Endothelial cell of umbilical vein (primary cell): ENCODE measurements at regions of chr5 and their contacts with region 1.

Region 1: DNA sequence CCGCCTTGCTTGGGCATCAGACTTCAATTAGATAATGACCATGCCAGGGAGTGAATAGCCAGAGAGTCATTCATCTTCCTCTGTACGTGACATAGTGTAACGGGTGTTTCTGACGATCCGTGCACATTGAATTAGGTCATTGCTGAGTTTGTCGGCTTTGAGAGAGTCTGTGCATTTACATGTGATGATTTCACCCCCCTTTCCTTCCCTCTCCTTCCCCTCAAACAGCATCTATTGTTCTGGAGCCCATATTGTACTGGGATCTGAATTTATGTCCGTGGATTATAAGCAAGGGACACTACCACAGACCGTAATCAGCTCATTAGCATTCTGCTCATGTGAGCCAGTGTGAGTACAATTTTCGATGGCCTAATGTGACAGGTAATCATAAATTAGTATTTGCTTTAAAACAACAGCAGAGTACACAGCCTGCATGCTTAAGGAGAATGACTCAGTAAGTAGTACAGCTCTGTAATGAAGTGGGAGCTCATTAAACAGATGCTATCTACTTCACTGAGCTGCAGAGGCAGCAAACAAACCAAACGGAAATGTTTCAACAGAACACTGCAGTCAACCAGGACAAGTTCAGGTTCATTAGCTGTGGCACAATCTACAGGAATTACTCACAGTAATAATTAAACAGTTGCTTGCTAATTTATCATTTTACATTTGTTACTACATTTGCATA is 302.1 kb downstream of the CSNK1G3 start:
- DNase-seq: peak; percentile 93
- H3K4me3 ChIP-seq: peak overlapping the region in 1 of 3 experiments; percentile 6
- H3K27ac ChIP-seq: peak overlapping the region; percentile 51
- H3K4me1 ChIP-seq: peaks cover 13% of the 10 kb centered on the region
- H3K27me3 ChIP-seq: no peaks in the 10 kb centered on the region
- CTCF ChIP-seq: no peak
- POLR2A ChIP-seq: no peak

Region 2: DNA sequence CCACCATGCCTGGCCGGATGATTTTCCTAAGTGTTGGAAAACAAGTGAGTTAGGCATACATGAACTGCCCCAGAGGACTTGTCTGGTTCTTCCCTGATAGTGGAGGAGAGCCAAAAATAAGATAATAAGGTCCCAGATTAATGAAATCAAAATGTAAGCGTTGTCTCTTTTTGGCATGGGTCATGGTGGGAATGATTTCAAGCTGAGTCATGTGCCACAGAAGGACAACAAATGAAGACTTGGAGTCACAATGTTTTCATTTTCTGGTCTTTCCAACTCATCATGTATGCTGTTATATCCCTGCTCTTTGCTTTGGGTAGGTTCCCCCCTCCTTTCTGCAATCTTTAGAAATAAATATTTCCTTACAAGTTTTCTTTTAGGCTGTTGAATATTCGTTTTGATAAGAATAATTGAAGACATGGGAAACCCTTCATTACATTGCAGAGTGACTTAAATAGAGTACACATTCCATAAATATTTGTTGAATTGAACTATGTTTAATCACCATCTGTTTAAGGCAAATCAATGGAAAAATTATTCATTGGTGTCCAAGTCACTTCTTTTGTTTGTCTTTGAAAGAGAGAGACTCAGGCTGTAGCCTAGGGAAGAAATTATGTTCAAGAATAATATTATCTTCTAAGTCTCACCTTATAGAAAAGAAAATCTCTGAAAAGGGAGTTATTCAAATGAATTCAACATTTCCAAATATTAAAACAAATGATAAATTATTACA is 105.8 kb before region 1 on chr5:
- CTCF ChIA-PET with region 1: no interaction called
- POLR2A ChIA-PET with region 1: no interaction called
- dilution Hi-C with region 1: no loop called
- intact Hi-C with region 1: loop called (anchors 2 kb)
- DNase-seq: peak; percentile 77
- H3K4me3 ChIP-seq: no peak overlapping the region
- H3K27ac ChIP-seq: peak overlapping the region; percentile 64
- H3K4me1 ChIP-seq: peaks cover 23% of the 10 kb centered on the region
- H3K27me3 ChIP-seq: no peaks in the 10 kb centered on the region
- CTCF ChIP-seq: no peak
- POLR2A ChIP-seq: no peak

Region 3: DNA sequence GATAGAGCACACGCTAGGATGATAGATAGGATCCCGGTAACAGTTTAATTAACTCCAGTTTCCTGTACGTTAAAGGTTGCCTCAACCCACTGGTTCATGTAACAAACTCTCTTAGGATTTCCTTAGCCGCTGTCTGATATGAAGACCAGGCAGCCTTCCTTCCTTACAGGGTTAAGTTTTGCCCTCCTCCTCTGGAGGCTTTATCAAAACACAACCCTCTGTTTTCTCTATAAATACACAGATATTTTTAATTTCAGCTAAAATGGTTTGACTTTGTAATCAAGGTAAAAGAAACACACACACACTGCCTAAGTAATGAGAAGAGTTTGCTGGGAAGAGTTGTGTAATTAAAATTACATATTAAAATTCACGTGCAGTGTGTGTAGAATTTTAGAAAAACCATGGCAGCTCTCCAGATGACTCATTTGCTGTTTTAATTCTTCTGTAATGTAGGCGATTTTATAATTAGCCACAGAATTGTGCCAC is 67.7 kb after region 1 on chr5:
- CTCF ChIA-PET with region 1: interaction called, 3 read pairs
- POLR2A ChIA-PET with region 1: no interaction called
- dilution Hi-C with region 1: no loop called
- intact Hi-C with region 1: loop called (anchors 1 kb)
- DNase-seq: peak; percentile 90
- H3K4me3 ChIP-seq: peak overlapping the region in 1 of 3 experiments; percentile 58
- H3K27ac ChIP-seq: peak overlapping the region; percentile 48
- H3K4me1 ChIP-seq: peaks cover 27% of the 10 kb centered on the region
- H3K27me3 ChIP-seq: peaks cover 3 to 7% of the 10 kb centered on the region in 2 experiments
- CTCF ChIP-seq: no peak
- POLR2A ChIP-seq: no peak

Region 4: DNA sequence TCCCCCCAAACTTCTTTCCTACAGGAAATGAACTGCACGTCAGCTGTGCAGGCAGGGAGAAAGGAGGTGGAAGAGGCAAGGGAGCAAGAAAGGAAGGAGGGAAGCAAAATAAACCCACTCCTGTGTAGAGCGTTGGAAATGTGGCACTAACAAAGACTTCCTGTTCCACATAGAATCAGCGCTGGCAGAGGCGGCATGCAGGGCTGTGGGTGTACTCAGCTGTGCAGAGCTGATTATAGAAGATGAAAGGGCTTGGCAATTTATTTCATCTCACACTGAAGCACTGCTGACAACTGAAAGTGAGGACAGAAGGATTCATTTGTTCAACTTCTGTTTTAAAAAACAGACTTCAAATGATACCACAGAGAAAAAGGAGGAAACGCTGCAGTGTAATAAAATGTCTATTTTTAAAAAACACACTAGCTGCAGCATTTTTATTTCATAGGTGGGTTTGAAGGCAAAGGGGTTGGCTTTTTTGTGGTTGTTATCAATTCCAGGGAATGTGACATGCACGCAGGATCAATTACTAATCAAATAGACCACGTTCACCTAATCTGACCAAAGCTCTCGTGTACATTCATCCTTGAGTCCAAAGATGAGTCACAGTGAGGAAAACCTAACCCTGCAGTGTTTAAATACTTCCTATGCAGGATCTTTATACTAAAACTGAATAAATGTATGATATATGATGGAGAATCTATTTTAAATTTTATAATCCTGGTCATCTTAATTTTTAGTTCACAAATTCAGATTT is 348.9 kb after region 1 on chr5:
- CTCF ChIA-PET with region 1: no interaction called
- POLR2A ChIA-PET with region 1: no interaction called
- dilution Hi-C with region 1: no loop called
- intact Hi-C with region 1: no loop called
- DNase-seq: peak; percentile 59
- H3K4me3 ChIP-seq: no peak overlapping the region
- H3K27ac ChIP-seq: no peak overlapping the region
- H3K4me1 ChIP-seq: peaks cover 4% of the 10 kb centered on the region
- H3K27me3 ChIP-seq: no peaks in the 10 kb centered on the region
- CTCF ChIP-seq: no peak
- POLR2A ChIP-seq: no peak